ENCODE measurements at regions of chr10 and their contacts with region 1.

Region 1: GRCh38 chr10:5283305-5284158 is 81.2 kb upstream of the UCN3 start:
- DNase-seq: peak; percentile 56 to 76
- H3K4me3 ChIP-seq: peak overlapping the region; percentile 27; the same call in 1 of the 2 replicates
- H3K27ac ChIP-seq: peak overlapping the region; percentile 92
- H3K4me1 ChIP-seq: peaks cover 32% of the 10 kb centered on the region
- H3K27me3 ChIP-seq: no peaks in the 10 kb centered on the region
- CTCF ChIP-seq: peak; percentile 73

Region 2: GRCh38 chr10:4981722-4982471 is 301.6 kb before region 1 on chr10:
- CTCF ChIA-PET with region 1: no interaction called
- POLR2A ChIA-PET with region 1: interaction called, 5 read pairs
- intact Hi-C with region 1: loop called (anchors 1 kb)
- DNase-seq: peak; percentile 75 to 84
- H3K4me3 ChIP-seq: no peak overlapping the region
- H3K27ac ChIP-seq: peak overlapping the region; percentile 61
- H3K4me1 ChIP-seq: peaks cover 6% of the 10 kb centered on the region; the same call in 1 of the 2 replicates
- H3K27me3 ChIP-seq: no peaks in the 10 kb centered on the region
- CTCF ChIP-seq: peak; percentile 51

Region 3: DNA sequence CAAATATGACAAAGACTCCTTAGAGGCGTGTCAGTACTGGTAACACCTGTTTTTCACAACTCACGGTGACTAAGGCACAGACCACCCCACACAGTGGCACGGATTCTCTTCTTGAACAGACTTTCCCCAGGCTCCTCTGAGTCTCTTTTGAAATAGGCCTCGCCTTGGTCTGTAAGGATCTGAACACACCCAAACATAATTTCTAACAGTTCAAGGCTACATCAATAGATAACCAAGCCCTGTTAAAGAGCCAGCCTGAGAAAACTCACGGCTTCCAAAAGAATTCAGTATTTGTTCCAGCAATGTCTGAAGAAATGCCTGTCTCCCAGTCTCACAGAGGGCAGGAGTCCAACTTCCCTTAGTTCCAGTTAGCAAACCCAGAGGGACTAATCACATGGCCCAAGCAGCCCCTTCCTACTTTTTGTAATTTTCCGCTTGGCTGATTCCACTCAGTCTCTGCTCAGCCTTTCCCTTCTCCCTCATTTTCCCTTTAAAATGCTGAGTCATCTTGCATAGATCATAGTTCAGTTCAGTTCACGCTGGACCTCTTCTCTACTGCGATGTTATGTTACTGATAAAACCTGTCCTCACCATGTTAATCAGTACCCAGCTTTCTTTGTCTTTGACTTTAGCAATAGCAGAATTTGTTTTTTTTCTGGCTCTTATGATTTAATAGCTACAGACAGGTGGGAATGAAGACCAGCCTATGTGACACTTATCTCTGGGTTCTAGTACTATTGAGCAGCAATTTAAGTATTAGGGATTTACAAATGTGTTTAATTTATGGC is 211.9 kb before region 1 on chr10:
- CTCF ChIA-PET with region 1: no interaction called
- POLR2A ChIA-PET with region 1: no interaction called
- intact Hi-C with region 1: loop called (anchors 2 kb)
- DNase-seq: peak; percentile 74 to 85
- H3K4me3 ChIP-seq: peak overlapping the region; percentile 38; the same call in 1 of the 2 replicates
- H3K27ac ChIP-seq: peak overlapping the region; percentile 99
- H3K4me1 ChIP-seq: peaks cover 50% of the 10 kb centered on the region
- H3K27me3 ChIP-seq: no peaks in the 10 kb centered on the region
- CTCF ChIP-seq: no peak

Region 4: DNA sequence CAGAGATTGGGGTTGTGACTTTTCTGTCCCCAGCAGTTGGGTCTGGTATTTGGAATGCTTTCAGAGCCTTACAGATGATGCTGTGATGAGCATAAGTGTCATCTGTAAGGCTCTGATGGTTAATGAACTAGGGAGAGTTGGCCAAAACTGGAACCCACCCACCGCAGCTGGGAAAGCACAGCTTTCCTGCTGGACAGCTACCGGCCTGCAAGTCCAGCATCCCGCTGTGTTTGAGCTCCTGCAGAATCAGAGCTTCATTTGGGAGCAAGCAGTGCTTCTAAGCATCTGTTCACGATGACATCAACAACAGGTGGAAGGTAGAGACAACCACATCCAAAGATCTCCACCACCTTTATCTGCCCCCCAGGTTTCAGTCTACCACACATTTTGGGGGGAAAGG is 92.9 kb after region 1 on chr10:
- CTCF ChIA-PET with region 1: interaction called, 14 read pairs
- POLR2A ChIA-PET with region 1: no interaction called
- intact Hi-C with region 1: loop called (anchors 5 kb)
- DNase-seq: no peak
- H3K4me3 ChIP-seq: no peak overlapping the region
- H3K27ac ChIP-seq: no peak overlapping the region
- H3K4me1 ChIP-seq: no peaks in the 10 kb centered on the region
- H3K27me3 ChIP-seq: no peaks in the 10 kb centered on the region
- CTCF ChIP-seq: no peak

Region 5: GRCh38 chr10:5434017-5434753 is 150.7 kb after region 1 on chr10:
- CTCF ChIA-PET with region 1: no interaction called
- POLR2A ChIA-PET with region 1: no interaction called
- intact Hi-C with region 1: loop called (anchors 2 kb)
- DNase-seq: peak in 1 of 2 experiments; percentile 14
- H3K4me3 ChIP-seq: no peak overlapping the region
- H3K27ac ChIP-seq: peak overlapping the region; percentile 43
- H3K4me1 ChIP-seq: peaks cover 10% of the 10 kb centered on the region; the same call in 1 of the 2 replicates
- H3K27me3 ChIP-seq: no peaks in the 10 kb centered on the region
- CTCF ChIP-seq: peak; percentile 76